K562 (cell line): ENCODE measurements at regions of chr2 and their contacts with region 1.

Region 1: DNA sequence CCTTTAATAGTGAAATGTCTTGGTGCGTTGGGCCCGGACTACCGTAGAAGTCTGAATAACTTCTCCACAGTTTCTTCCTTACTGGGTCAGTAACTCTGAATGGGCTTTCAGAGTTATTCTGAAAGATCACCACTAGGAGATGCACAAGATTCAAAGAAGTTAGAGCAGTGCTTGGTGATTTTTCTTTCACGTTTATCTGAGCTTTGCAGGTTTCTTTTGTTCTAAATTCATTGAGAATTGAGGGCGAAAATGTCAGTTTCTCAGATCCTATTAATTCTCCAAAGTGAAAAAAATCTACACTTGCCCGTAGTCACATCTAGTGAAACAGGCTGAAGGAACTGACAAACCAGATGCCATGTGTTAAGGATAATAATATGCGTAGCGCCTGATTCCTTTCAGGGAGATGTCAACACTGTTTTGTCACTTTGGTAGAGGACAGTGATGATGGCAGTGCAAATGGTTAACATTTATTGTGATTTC is 70.1 kb downstream of the QPCT start:
- DNase-seq: peak; percentile 27 to 62 (median 38)
- ATAC-seq: peak; percentile 87
- H3K4me3 ChIP-seq: no peak overlapping the region
- H3K27ac ChIP-seq: peak overlapping the region; percentile 34; the same call in 1 of the 3 replicates
- H3K4me1 ChIP-seq: peaks cover 3 to 15% of the 10 kb centered on the region in 2 experiments; a peak in 2 of 5 replicates
- H3K27me3 ChIP-seq: peaks cover 0 to 4% of the 10 kb centered on the region in 2 experiments; a peak in 1 of 5 replicates
- CTCF ChIP-seq: peak; percentile 68 to 95 (median 88); a peak in 5 of 6 replicates
- EP300 ChIP-seq: peak; percentile 16; the same call in 1 of the 2 replicates
- POLR2A ChIP-seq: no peak
- RAD21 ChIP-seq: peak; percentile 98 to 99

Region 2: DNA sequence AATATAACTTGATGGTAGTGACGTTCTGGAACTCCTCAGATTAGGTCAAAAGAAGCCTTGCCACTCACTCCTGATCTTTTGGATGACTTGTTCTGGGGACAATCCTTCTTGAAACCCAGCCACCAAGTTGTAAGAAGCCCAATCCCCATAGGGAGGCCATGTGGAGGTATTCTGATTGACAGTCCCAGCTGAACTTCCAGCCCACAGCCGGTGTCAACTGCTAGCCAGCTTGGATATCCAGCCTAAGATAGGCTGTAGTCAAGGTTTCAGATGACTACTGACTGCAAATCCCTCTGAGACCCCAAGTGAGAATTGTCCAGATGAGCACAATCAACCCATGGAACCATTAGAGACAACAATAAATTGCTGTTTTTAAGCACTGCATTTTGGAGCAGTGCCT is 289.1 kb before region 1 on chr2:
- CTCF ChIA-PET with region 1: no interaction called
- POLR2A ChIA-PET with region 1: no interaction called
- in situ Hi-C with region 1: no loop called
- intact Hi-C with region 1: no loop called
- DNase-seq: no peak
- ATAC-seq: no peak
- H3K4me3 ChIP-seq: no peak overlapping the region
- H3K27ac ChIP-seq: no peak overlapping the region
- H3K4me1 ChIP-seq: no peaks in the 10 kb centered on the region
- H3K27me3 ChIP-seq: no peaks in the 10 kb centered on the region
- CTCF ChIP-seq: no peak
- EP300 ChIP-seq: no peak
- POLR2A ChIP-seq: no peak
- RAD21 ChIP-seq: no peak

Region 3: DNA sequence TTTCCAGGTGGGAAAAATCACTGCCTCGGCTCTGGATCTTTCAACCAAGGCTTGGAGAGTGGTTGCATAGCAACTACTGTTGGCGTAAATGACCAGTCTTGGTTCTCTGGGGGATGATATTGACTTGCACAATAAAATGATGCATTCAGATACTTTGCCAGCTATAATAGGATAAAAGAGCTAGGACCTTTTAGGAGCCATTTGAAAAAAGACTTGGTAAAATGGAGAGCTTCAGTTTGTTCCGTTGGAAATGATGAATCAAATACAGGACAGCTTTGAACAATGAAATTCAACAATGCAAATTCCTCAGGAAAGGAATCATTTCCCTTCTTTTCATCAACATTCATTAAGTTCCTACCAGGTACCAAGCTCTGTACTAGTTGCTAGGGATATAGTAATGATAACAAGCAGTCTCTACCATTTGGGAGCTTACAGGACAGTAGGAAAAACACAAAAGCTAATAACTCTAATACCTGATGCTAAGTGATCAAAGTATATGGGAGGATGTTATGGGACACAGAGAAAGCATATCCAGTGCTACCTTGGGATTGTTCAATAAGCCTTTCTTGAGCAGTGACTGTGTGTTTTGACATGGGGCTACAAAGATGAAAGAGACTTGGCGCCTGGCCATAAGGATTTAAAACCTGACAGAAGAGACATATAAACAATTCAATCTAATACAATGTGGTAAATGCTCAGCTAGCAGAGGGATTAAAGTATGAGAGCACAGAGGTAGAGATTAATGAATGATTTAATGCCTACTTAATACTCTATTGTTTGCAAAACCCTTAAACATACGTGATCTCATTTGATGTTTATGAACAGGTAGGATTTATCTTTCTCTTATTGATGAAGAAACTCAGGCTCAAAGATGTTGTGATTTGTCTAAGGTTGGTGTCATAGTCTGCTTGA is 40.6 kb after region 1 on chr2:
- CTCF ChIA-PET with region 1: no interaction called
- POLR2A ChIA-PET with region 1: no interaction called
- in situ Hi-C with region 1: loop called (anchors 5 kb)
- intact Hi-C with region 1: no loop called
- DNase-seq: no peak
- ATAC-seq: no peak
- H3K4me3 ChIP-seq: no peak overlapping the region
- H3K27ac ChIP-seq: no peak overlapping the region
- H3K4me1 ChIP-seq: no peaks in the 10 kb centered on the region; a peak in 1 of 5 replicates
- H3K27me3 ChIP-seq: 0 out of 5 replicates have a peak, but pooled peaks cover 0 to 4% of the 10 kb centered on the region in 2 experiments
- CTCF ChIP-seq: no peak
- EP300 ChIP-seq: no peak
- POLR2A ChIP-seq: no peak
- RAD21 ChIP-seq: no peak

Region 4: GRCh38 chr2:37529830-37530415 is 115.4 kb after region 1 on chr2:
- CTCF ChIA-PET with region 1: interaction called, 4 read pairs
- POLR2A ChIA-PET with region 1: no interaction called
- in situ Hi-C with region 1: no loop called
- intact Hi-C with region 1: loop called (anchors 10 kb)
- DNase-seq: no peak
- ATAC-seq: no peak
- H3K4me3 ChIP-seq: no peak overlapping the region
- H3K27ac ChIP-seq: no peak overlapping the region
- H3K4me1 ChIP-seq: no peaks in the 10 kb centered on the region
- H3K27me3 ChIP-seq: no peaks in the 10 kb centered on the region
- CTCF ChIP-seq: no peak
- EP300 ChIP-seq: no peak
- POLR2A ChIP-seq: no peak
- RAD21 ChIP-seq: no peak

Region 5: GRCh38 chr2:37575780-37576179 is 161.3 kb after region 1 on chr2:
- CTCF ChIA-PET with region 1: no interaction called
- POLR2A ChIA-PET with region 1: no interaction called
- in situ Hi-C with region 1: no loop called
- intact Hi-C with region 1: loop called (anchors 1 kb)
- DNase-seq: no peak
- ATAC-seq: peak; percentile 75
- H3K4me3 ChIP-seq: no peak overlapping the region
- H3K27ac ChIP-seq: no peak overlapping the region
- H3K4me1 ChIP-seq: no peaks in the 10 kb centered on the region
- H3K27me3 ChIP-seq: no peaks in the 10 kb centered on the region
- CTCF ChIP-seq: peak; percentile 23 to 39 (median 27); a peak in 1 of 6 replicates
- EP300 ChIP-seq: no peak
- POLR2A ChIP-seq: no peak
- RAD21 ChIP-seq: peak in 1 of 2 experiments; percentile 49; a peak in 2 of 4 replicates

Region 6: GRCh38 chr2:37832590-37833197 is 418.2 kb after region 1 on chr2:
- CTCF ChIA-PET with region 1: interaction called, 30 read pairs
- POLR2A ChIA-PET with region 1: no interaction called
- in situ Hi-C with region 1: no loop called
- intact Hi-C with region 1: loop called (anchors 1 kb)
- DNase-seq: peak; percentile 49 to 79 (median 62)
- ATAC-seq: peak; percentile 99
- H3K4me3 ChIP-seq: no peak overlapping the region
- H3K27ac ChIP-seq: no peak overlapping the region
- H3K4me1 ChIP-seq: no peaks in the 10 kb centered on the region
- H3K27me3 ChIP-seq: peaks cover 0 to under 1% of the 10 kb centered on the region in 2 experiments; a peak in 1 of 5 replicates
- CTCF ChIP-seq: peak; percentile 69 to 88 (median 73)
- EP300 ChIP-seq: no peak
- POLR2A ChIP-seq: no peak
- RAD21 ChIP-seq: peak; percentile 99